ENCODE measurements at regions of chr2 and their contacts with region 1.

Region 1: DNA sequence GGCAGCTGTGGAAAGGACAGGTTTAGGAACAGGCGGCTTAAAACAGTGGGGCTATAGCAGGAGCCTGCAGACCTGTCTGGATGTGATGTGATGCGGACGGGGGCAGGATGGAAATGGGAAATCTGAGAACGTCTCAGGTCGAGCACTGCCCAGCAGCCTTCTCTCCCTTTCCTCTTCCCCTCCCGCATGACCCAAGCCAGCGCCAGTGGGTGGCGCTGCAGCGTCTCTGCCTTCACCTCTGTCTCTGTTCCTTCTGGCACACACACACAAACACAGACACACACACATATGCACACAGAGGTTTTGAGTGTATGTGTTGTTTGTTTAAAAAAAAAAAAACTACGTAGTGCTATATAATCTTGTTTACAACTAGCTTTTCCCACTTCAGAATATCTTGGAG is 82.0 kb upstream of the SLC66A3 start:
- DNase-seq: peak; percentile 55
- H3K4me3 Mint-ChIP-seq: no peak overlapping the region
- H3K27ac Mint-ChIP-seq: no peak overlapping the region
- H3K4me1 Mint-ChIP-seq: peaks cover 17% of the 10 kb centered on the region
- H3K27me3 Mint-ChIP-seq: peaks cover 16% of the 10 kb centered on the region

Region 2: DNA sequence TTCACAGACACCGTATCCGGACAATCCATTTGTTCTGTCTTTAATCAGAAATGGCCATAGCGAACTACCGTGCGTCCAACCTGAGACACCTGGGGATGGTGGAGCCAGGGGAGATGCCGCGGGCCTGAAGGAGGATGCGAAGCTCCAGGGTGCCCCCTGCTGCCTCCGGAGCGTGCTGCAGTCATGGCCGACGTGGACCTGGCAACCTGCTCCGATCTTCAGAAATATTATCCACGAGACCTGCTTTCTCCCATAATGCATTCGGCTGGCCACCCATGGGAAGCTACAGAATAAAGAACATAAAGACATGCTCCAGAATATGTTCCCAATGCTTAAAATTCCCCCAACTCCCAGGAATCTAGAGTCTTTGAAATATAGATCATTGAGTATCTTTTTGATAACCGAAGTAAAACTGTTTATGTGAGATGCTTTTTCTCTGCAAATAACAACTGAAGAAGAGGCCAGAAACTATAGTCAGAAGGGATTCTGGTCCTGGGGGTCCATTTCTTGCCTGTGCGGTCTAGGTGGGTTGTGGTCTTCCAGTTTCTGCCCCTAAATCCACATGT is 51.3 kb after region 1 on chr2:
- CTCF ChIA-PET with region 1: interaction called, 17 read pairs
- POLR2A ChIA-PET with region 1: no interaction called
- intact Hi-C with region 1: loop called (anchors 1 kb)
- DNase-seq: peak; percentile 84
- H3K4me3 Mint-ChIP-seq: no peak overlapping the region
- H3K27ac Mint-ChIP-seq: no peak overlapping the region
- H3K4me1 Mint-ChIP-seq: peaks cover 8% of the 10 kb centered on the region
- H3K27me3 Mint-ChIP-seq: no peaks in the 10 kb centered on the region